Common myeloid progenitor, CD34-positive (primary cell): ENCODE measurements at regions of chr1 and their contacts with region 1.

Region 1: GRCh38 chr1:33668695-33669094 is 195.2 kb upstream of the HMGB4 start:
- DNase-seq: no peak
- H3K4me3 ChIP-seq: no peak overlapping the region
- H3K27ac ChIP-seq: no peak overlapping the region
- H3K4me1 ChIP-seq: no peaks in the 10 kb centered on the region
- H3K27me3 ChIP-seq: peaks cover 0 to 13% (median 8%) of the 10 kb centered on the region in 5 experiments

Region 2: DNA sequence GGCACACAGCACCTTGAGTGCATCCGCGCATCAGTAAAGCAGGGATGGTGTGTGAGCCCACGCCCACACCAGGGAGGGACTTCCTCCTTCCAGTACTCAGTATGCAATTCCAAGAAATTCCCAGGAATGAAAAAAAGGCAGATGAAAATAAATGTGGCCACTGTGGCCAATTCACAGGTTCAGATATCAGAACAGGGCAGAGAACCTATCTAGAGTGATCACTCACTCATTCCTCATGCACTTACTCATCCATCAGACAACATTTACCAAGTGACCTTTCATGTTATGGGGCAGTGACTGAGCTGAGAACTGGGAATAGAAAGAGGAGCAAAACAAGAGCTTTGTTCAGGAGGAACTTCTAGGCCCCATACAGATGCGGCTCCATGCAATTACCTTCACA is 82.6 kb before region 1 on chr1:
- CTCF ChIA-PET with region 1: no interaction called
- POLR2A ChIA-PET with region 1: interaction called, 10 read pairs
- DNase-seq: no peak
- H3K4me3 ChIP-seq: no peak overlapping the region
- H3K27ac ChIP-seq: no peak overlapping the region
- H3K4me1 ChIP-seq: no peaks in the 10 kb centered on the region
- H3K27me3 ChIP-seq: peaks cover 0 to 3% (median 0%) of the 10 kb centered on the region in 5 experiments

Region 3: DNA sequence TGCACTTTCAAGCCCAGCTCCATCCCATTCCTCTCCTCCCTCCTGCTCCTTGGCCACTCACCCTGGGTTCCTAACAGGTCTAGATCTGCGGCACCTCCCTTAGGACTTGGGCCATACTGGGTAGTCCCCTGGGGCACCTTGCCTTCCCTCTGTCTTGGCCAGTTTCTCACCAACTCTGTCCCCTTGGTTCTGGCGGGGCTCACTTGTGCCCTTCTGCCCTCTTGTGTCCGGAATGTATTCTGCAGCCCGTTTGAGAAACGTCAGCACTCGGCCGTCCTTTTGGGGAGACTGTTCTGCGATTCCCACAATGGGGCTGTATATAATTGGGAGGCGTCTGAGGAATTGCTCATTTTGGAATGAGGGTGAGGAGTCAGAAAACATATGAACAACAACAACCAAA is 33.9 kb before region 1 on chr1:
- CTCF ChIA-PET with region 1: no interaction called
- POLR2A ChIA-PET with region 1: no interaction called
- DNase-seq: peak; percentile 29 to 54 (median 48)
- H3K4me3 ChIP-seq: no peak overlapping the region
- H3K27ac ChIP-seq: no peak overlapping the region
- H3K4me1 ChIP-seq: peaks cover 0 to 3% (median 0%) of the 10 kb centered on the region in 4 experiments
- H3K27me3 ChIP-seq: peaks cover 0 to 22% (median 12%) of the 10 kb centered on the region in 5 experiments